Activated CD4-positive, alpha-beta T cell treated with anti-CD3 and anti-CD28 coated beads for 36 hours (primary cell): ENCODE measurements at regions of chr11 and their contacts with region 1.

Region 1: GRCh38 chr11:118198370-118198769 is 21.9 kb upstream of the SCN2B start:
- DNase-seq: peak; percentile 92
- ATAC-seq: peak; percentile 35
- H3K4me3 Mint-ChIP-seq: peak overlapping the region; percentile 20
- H3K27ac Mint-ChIP-seq: peak overlapping the region; percentile 71
- H3K4me1 Mint-ChIP-seq: peaks cover 14% of the 10 kb centered on the region
- H3K27me3 Mint-ChIP-seq: no peaks in the 10 kb centered on the region

Region 2: DNA sequence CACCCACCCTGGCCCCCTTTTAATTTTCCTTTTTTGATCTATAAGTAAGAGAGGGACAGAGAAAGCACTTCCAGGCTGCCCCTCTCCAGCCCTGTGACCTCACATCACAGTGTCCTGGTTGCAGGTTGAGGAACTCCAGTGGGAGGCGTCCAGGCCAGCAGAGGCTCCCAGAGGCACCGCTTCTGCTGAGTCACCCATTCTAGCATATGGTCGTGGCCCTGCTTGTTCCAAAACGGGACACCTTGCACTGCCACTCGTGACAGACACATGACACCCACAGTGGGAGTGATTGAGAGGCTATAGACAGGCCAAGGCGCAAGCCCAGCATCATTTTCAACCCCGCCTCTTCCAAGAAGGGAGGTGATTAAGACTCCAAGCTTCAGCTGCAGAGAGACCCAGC is 137.5 kb before region 1 on chr11:
- CTCF ChIA-PET with region 1: no interaction called
- POLR2A ChIA-PET with region 1: no interaction called
- intact Hi-C with region 1: no loop called
- DNase-seq: no peak
- ATAC-seq: peak; percentile 30
- H3K4me3 Mint-ChIP-seq: no peak overlapping the region
- H3K27ac Mint-ChIP-seq: no peak overlapping the region
- H3K4me1 Mint-ChIP-seq: no peaks in the 10 kb centered on the region
- H3K27me3 Mint-ChIP-seq: peaks cover 5% of the 10 kb centered on the region

Region 3: GRCh38 chr11:118145285-118146227 is 52.8 kb before region 1 on chr11:
- CTCF ChIA-PET with region 1: interaction called, 3 read pairs
- POLR2A ChIA-PET with region 1: no interaction called
- intact Hi-C with region 1: loop called in 1 of 2 experiments (anchors 1 kb)
- DNase-seq: peak; percentile 96
- ATAC-seq: peak; percentile 96
- H3K4me3 Mint-ChIP-seq: peak overlapping the region; percentile 73
- H3K27ac Mint-ChIP-seq: no peak overlapping the region
- H3K4me1 Mint-ChIP-seq: peaks cover 2% of the 10 kb centered on the region
- H3K27me3 Mint-ChIP-seq: peaks cover 43% of the 10 kb centered on the region

Region 4: GRCh38 chr11:118163494-118163893 is 34.9 kb before region 1 on chr11:
- CTCF ChIA-PET with region 1: no interaction called
- POLR2A ChIA-PET with region 1: no interaction called
- intact Hi-C with region 1: no loop called
- DNase-seq: no peak
- ATAC-seq: no peak
- H3K4me3 Mint-ChIP-seq: no peak overlapping the region
- H3K27ac Mint-ChIP-seq: no peak overlapping the region
- H3K4me1 Mint-ChIP-seq: no peaks in the 10 kb centered on the region
- H3K27me3 Mint-ChIP-seq: peaks cover 7% of the 10 kb centered on the region

Region 5: GRCh38 chr11:118227865-118228785 is 29.8 kb after region 1 on chr11:
- CTCF ChIA-PET with region 1: interaction called, 27 read pairs
- POLR2A ChIA-PET with region 1: interaction called, 10 read pairs
- intact Hi-C with region 1: loop called in 1 of 2 experiments (anchors 1 kb)
- DNase-seq: no peak
- ATAC-seq: no peak
- H3K4me3 Mint-ChIP-seq: peak overlapping the region; percentile 15
- H3K27ac Mint-ChIP-seq: no peak overlapping the region
- H3K4me1 Mint-ChIP-seq: peaks cover 49% of the 10 kb centered on the region
- H3K27me3 Mint-ChIP-seq: no peaks in the 10 kb centered on the region

Region 6: GRCh38 chr11:118258410-118258809 is 60.0 kb after region 1 on chr11:
- CTCF ChIA-PET with region 1: interaction called, 20 read pairs
- POLR2A ChIA-PET with region 1: no interaction called
- intact Hi-C with region 1: no loop called
- DNase-seq: peak; percentile 33
- ATAC-seq: peak; percentile 70
- H3K4me3 Mint-ChIP-seq: no peak overlapping the region
- H3K27ac Mint-ChIP-seq: no peak overlapping the region
- H3K4me1 Mint-ChIP-seq: peaks cover 42% of the 10 kb centered on the region
- H3K27me3 Mint-ChIP-seq: no peaks in the 10 kb centered on the region

Region 7: GRCh38 chr11:118295834-118296454 is 97.6 kb after region 1 on chr11:
- CTCF ChIA-PET with region 1: interaction called, 12 read pairs
- POLR2A ChIA-PET with region 1: no interaction called
- intact Hi-C with region 1: loop called (anchors 1 kb)
- DNase-seq: peak; percentile 62
- ATAC-seq: peak; percentile 85
- H3K4me3 Mint-ChIP-seq: no peak overlapping the region
- H3K27ac Mint-ChIP-seq: peak overlapping the region; percentile 68
- H3K4me1 Mint-ChIP-seq: peaks cover 16% of the 10 kb centered on the region
- H3K27me3 Mint-ChIP-seq: no peaks in the 10 kb centered on the region

Region 8: GRCh38 chr11:118338637-118339061 is 140.3 kb after region 1 on chr11:
- CTCF ChIA-PET with region 1: interaction called, 14 read pairs
- POLR2A ChIA-PET with region 1: no interaction called
- intact Hi-C with region 1: loop called in 1 of 2 experiments (anchors 2 kb)
- DNase-seq: peak; percentile 94
- ATAC-seq: peak; percentile 63
- H3K4me3 Mint-ChIP-seq: peak overlapping the region; percentile 83
- H3K27ac Mint-ChIP-seq: peak overlapping the region; percentile 100
- H3K4me1 Mint-ChIP-seq: peaks cover 45% of the 10 kb centered on the region
- H3K27me3 Mint-ChIP-seq: no peaks in the 10 kb centered on the region

Region 9: DNA sequence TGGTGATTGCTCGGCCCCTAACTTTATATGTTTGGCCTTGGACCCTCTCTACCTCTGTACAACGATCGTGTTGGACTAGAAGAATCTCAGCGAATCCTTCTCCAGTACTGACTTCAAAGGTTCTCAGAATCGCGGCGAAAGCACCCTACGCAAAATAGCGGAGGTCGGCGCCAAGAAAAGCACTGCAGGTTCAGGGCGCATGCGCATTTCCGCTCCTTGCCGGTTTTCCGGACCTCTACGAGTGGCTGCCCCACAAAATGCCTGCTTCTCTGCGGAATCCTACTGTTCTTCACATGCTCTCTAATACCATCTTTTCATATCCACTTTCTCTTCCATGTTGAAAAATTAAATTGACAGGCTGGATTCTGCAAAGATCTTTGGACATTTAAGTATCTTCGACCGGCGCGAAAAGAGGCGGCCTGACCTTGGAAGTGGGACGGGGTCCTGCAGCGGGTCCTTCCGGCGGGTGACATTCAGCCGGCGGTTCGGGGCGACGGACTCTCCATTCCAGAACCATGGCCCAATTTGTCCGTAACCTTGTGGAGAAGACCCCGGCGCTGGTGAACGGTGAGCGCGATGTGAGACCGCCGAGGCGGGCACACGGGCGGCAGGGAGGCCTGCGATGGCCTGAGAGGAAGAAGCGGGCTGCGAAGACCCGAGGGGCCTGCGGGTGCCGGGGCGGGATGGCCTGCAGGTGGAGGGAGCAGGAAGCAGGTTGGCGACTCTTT is 202.9 kb after region 1 on chr11 and contains the start of gene ATP5MG:
- CTCF ChIA-PET with region 1: interaction called, 5 read pairs
- POLR2A ChIA-PET with region 1: no interaction called
- intact Hi-C with region 1: loop called in 1 of 2 experiments (anchors 5 kb)
- DNase-seq: peak; percentile 96
- ATAC-seq: peak; percentile 63
- H3K4me3 Mint-ChIP-seq: peak within 1 kb of the TSS; percentile 93
- H3K27ac Mint-ChIP-seq: peak within 1 kb of the TSS; percentile 100
- H3K4me1 Mint-ChIP-seq: peaks cover 64% of the 10 kb centered on the region
- H3K27me3 Mint-ChIP-seq: no peaks in the 10 kb centered on the region
- total RNA-seq, gene ATP5MG: 136 to 229 TPM